ENCODE measurements at regions of chr4 and their contacts with region 1.

Region 1: DNA sequence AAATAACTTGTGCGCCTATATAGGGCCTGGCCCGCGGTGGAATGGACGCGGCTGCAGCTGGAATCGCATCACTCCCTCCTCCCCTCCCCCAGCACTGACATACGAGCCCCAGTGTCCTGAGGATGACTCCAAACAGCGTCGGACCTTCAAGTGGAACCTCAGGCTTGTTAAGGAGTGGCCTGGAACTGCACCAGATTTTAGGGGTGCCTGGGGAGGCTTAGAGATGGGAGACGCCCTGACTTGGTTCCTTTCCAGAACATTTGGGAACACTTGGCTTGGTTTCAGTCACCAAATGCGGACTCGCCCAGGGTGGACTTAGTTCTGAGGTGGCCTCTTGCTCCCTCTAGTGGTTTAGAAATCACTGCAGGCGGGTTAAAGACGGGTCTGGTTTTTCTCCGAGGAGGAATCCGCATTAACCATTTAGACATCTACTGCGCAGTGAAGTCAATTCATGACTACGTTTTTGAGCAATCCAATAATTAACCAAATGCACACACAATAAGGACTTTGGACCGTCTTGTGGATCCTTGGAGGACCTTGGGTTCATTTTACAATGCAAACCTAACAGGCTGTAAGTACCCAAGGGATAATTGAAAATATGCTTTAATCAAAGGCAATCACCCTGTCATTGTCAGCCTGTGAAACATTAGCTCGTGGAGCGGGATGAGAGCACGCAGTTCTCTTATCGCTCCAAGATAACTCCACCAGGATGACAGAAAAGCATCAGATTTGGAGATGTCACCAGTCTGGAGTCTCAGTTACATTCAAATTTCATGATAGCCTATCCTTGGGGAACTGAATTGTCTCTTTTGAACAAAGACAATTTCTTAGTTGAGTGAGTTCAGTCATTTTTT is 11.2 kb upstream of the PDGFRA start:
- DNase-seq: peak; percentile 85 to 94 (median 87)
- H3K4me3 ChIP-seq: peak overlapping the region; percentile 59 to 69 (median 66)
- H3K27ac ChIP-seq: no peak overlapping the region
- H3K4me1 ChIP-seq: no peaks in the 10 kb centered on the region
- H3K27me3 ChIP-seq: no peaks in the 10 kb centered on the region
- CTCF ChIP-seq: peak; percentile 93

Region 2: DNA sequence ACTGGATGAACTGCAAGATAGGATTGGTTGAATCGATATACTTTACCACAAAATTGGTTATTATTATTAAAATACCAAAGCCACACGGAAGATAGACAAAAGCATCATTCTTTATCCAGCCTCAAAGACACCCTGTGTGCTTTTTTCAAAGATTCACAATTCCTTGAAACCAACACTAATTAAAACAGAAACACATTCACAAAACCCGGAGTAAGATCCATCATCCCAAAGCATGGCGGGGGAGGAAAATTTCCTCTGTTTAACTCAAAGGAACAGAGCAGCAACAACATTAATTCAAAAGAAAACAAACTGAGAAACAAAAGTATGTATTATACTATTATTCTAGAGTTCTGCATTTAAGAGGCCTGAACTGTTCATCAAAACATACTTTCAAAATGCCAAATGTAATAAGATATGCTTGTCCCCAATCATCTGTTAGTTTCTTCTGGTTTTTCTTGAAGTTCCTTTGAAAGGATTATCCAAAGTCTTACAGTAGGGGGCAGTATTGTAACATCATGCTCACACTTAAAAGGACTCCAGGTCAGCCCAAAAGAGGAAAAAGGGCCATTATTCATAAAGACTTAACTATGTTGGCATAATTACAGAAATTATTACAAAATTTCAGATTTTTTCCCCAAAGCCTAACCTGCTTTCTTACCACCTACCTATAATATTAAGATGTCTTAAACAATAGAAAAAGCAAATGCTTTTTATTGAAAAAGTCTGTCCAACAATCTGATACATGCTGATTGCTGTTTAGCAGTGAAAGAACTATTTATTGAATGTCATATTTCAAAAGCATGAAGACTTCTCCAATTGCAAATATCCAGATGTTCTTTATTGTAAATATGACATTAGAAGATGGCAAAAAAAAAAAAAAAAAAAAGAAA is 1020.7 kb before region 1 on chr4:
- intact Hi-C with region 1: loop called (anchors 10 kb)
- DNase-seq: peak in 2 of 5 donors; percentile 87 to 93
- H3K4me3 ChIP-seq: peak overlapping the region in 1 of 3 donors; percentile 5
- H3K27ac ChIP-seq: no peak overlapping the region
- H3K4me1 ChIP-seq: peaks cover 0 to 2% (median 0%) of the 10 kb centered on the region in 3 donors
- H3K27me3 ChIP-seq: no peaks in the 10 kb centered on the region
- CTCF ChIP-seq: peak; percentile 79

Region 3: DNA sequence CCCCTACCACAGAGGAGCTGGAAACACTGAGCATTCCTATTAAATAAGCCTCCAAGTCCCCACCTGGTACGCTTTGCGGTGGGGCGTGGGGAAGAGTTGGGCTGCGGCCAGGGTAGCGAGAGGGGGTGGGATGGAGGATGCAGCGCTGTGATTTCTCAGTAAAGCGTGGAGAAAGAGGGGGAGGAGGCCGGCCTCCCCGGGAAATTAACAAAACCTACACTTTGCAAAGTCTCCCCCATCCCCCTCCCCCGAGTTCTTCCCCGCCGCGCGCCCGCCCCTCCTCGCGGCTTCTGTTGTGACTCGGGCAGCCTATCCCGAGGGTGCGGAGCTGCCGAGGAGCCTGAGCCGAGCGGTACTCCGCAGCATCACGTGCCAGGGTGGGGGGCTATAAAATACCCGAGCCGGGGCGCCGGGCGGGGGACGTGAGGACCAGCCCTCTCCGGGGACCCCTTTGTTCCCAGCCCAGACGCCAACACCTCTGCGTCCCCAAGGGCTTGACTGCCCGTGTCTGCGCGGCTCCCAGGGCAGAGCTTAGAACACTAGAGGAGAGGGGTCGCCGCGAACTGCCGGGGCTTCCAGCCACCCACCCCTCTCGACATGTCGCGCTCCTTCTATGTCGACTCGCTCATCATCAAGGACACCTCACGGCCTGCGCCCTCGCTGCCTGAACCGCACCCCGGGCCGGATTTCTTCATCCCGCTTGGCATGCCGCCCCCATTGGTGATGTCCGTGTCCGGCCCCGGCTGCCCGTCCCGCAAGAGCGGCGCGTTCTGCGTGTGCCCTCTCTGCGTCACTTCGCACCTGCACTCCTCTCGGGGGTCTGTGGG is 117.9 kb before region 1 on chr4 and contains the start of gene GSX2:
- intact Hi-C with region 1: no loop called
- DNase-seq: peak in 2 of 5 donors; percentile 33 to 37
- H3K4me3 ChIP-seq: peak within 1 kb of the TSS in 2 of 3 donors; percentile 23 to 41
- H3K27ac ChIP-seq: no peak within 1 kb of the TSS
- H3K4me1 ChIP-seq: peaks cover 0 to 5% (median 4%) of the 10 kb centered on the region in 3 donors
- H3K27me3 ChIP-seq: peaks cover 82% of the 10 kb centered on the region
- CTCF ChIP-seq: no peak
- total RNA-seq, gene GSX2: not detected

Measured in kidney (tissue), 22 donors.